ENCODE measurements at regions of chr7 and their contacts with region 1.

Region 1: DNA sequence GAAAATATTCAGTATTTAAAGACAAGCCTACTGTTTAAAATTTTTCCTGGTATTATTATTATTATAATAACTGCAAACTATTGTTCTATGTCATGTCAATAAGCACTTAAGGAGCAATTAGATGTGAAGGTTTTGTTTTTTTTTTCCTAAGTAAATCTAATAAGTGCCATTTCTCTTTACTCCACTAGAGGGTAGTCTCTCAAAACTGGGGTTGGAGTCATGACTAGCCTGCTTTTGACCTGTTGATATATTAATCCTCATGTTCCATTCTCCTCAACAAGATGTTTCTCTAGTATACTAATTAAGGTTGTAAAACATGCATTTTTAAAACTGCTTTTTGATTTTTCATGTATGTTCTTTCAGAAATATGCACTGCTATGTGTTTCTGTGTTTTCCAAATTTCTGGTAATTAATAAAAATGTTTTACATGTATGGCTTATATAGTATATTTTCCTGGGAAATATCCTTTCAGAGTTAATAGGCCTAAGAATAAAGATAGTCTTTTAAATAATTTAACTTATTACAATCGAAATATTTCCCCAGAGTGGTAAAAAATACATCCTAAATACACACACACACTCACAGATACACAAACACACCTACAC is 1.0 kb upstream of the LRRN3 start:
- DNase-seq: no peak
- H3K4me3 ChIP-seq: peak overlapping the region in 7 of 59 donors; percentile 50 to 83 (median 71)
- H3K27ac ChIP-seq: no peak overlapping the region
- H3K27me3 ChIP-seq: no peaks in the 10 kb centered on the region
- CTCF ChIP-seq: peak; percentile 66 to 90 (median 82)

Region 2: GRCh38 chr7:111486472-111487142 is 396.7 kb after region 1 on chr7:
- intact Hi-C with region 1: loop called (anchors 5 kb)
- DNase-seq: peak in 1 of 10 donors; percentile 20
- H3K4me3 ChIP-seq: no peak overlapping the region
- H3K27ac ChIP-seq: no peak overlapping the region
- H3K27me3 ChIP-seq: no peaks in the 10 kb centered on the region
- CTCF ChIP-seq: peak; percentile 55 to 90 (median 75)

Region 3: DNA sequence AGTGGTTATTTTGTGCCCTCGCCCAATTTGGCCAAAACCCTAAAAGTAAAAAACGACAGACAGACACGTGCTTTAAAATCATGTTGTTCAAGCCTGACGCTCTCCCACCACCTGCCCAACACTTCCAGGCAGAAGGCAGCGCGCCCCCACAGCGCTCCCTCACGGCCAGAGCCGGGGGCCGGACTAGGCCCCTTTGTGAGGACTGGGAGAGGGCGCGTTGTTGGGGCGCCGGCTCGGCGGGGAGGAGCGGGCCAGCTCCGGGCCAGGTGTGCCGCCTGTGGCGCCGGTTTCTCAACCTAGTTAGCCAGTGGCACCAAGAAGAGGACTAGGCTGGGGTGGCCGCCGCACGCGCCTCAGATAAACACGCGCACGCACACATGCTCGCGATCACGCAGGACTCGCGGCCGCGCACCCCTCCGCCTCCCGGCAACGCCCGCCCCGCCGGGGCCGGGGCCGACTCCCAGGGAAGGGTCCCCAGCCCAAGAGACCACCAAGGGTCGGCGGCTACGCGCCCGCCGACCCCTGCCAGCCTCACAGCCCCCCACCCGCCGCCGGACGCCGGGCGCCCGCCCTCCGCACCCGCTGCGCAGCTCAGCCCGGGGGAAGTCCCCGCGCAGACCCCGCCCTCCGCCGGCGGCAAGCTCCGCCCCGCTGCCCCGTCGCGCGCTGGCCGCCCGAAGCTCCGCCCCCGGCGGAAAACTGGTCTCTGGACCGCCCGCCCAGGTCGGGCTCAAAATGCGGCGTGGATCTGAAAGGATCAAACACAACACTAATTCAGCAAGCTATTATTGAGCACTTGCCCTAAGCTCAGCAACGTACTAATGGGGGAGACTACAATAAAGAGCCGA is 472.2 kb after region 1 on chr7 and contains the start of gene IMMP2L:
- intact Hi-C with region 1: loop called in 1 of 2 experiments (anchors 5 kb)
- DNase-seq: peak; percentile 75 to 95 (median 85)
- H3K4me3 ChIP-seq: peak within 1 kb of the TSS; percentile 53 to 98 (median 84)
- H3K27ac ChIP-seq: peak within 1 kb of the TSS in 52 of 59 donors; percentile 40 to 95 (median 81)
- H3K27me3 ChIP-seq: no peaks in the 10 kb centered on the region
- CTCF ChIP-seq: peak in 44 of 56 donors; percentile 3 to 56 (median 32)
- total RNA-seq, gene IMMP2L: 9.9 to 48.1 (median 18.4) TPM